ENCODE measurements at regions of chr2 and their contacts with region 1.

Region 1: GRCh38 chr2:121128754-121129659 is 156.0 kb downstream of the TFCP2L1 start:
- DNase-seq: peak; percentile 73

Region 2: DNA sequence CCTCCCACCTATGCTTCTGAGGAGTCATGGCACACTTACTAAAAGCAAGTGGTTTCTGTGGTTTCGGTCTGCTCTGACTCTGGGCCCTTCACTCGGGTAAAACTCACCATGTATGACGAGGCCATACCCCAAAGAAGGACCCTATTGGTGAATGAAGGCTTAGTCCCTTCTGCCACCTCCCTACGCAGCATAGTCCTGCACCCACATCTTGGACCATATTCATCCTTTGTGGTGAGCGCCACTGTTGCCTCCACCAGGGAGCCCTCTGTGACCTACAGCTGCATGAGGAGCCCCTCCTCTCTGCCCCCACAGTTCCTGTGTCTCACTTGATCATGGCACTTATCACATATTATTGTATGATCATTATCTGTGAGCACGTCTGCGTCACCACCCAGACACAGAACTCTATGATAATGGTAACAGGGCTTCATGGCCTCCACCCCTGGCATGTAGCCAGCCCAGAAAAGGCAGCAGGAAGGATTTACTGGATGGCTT is 42.7 kb after region 1 on chr2:
- in situ Hi-C with region 1: no loop called
- DNase-seq: no peak

Region 3: GRCh38 chr2:121699421-121700333 is 570.7 kb after region 1 on chr2:
- in situ Hi-C with region 1: loop called (anchors 25 kb)
- DNase-seq: peak; percentile 81